A673 (cell line): ENCODE measurements at regions of chr6 and their contacts with region 1.

Region 1: DNA sequence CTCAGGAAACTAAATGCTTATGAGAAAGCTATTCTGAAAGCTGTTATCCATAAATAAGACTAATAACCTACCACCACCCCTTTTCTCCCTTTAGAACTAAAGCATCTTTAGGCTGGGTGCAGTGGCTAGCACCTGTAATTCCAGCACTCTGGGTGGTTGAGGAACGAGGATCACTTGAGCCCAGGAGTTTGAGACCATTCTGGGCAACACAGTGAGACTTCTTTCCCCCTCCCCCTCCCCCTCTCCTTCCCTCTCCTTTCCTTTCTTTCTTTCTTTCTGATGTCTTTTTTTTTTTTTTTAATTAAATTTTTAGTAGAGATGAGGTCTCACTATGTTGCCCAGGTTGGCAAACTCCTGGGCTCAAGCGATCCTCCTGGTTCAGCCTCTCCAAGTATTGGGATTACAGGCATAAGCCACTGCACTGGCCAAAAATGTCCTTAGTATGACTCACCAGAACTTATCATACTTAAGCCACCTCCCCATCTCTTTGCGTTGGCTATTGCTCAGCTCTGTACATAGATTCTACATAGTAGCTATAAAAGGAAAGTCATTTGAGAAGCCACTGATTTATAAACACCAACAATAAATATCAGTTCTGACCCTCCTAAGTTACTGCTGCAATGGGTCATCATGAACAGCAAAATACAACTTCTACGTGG is 54.8 kb upstream of the SPDEF start:
- DNase-seq: peak; percentile 27
- H3K4me3 ChIP-seq: no peak overlapping the region
- H3K27ac ChIP-seq: no peak overlapping the region
- H3K4me1 ChIP-seq: peaks cover 9% of the 10 kb centered on the region
- H3K27me3 ChIP-seq: no peaks in the 10 kb centered on the region
- CTCF ChIP-seq: no peak

Region 2: GRCh38 chr6:34161857-34162515 is 449.0 kb before region 1 on chr6:
- CTCF ChIA-PET with region 1: no interaction called
- POLR2A ChIA-PET with region 1: no interaction called
- intact Hi-C with region 1: loop called (anchors 10 kb)
- DNase-seq: no peak
- H3K4me3 ChIP-seq: no peak overlapping the region
- H3K27ac ChIP-seq: no peak overlapping the region
- H3K4me1 ChIP-seq: no peaks in the 10 kb centered on the region
- H3K27me3 ChIP-seq: no peaks in the 10 kb centered on the region
- CTCF ChIP-seq: no peak

Region 3: DNA sequence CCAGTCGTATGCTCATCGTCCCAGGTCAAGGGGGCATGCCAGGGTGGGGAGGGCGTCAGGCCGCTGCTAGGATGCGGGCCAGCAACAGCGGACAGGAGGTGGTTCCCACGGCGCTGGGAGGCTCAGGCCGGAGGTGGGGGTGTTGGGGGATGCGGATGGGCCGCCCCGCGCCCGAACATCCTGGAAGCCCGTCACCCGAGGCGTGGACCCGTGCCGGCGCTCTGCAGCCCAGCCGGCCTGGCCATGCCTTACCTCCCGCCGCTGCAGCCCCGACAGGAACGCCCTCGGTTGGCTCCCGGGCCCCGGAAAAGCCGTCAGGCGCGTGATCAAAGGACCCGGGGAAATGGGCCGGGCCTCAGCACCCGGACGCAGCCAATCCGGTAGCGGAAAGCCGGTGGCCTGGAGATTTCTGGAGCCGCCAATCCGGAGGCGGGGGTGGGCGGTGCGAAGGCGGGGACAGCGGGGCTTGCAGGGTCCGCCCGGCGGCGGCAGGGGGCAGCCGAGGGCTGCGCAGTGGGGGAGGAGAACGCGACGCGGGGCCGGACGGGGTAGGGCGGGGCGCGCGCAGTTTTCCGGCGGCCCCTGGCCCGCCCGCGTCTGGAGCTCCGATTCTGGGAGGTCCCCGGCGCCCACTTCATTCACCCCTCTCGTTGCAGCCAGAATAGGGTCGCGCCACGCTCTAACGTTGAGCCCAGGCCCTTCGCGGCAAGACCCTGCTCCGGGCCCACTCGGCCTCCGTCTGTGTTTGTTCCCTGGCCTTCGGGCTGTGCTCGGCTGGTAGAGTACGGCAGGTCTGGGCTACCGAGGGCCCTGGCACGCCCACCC is 362.0 kb before region 1 on chr6 and contains the start of gene SMIM29:
- CTCF ChIA-PET with region 1: interaction called, 5 read pairs
- POLR2A ChIA-PET with region 1: no interaction called
- intact Hi-C with region 1: loop called (anchors 5 kb)
- DNase-seq: peak; percentile 96
- H3K4me3 ChIP-seq: peak within 1 kb of the TSS; percentile 81
- H3K27ac ChIP-seq: peak within 1 kb of the TSS; percentile 72
- H3K4me1 ChIP-seq: peaks cover 19% of the 10 kb centered on the region
- H3K27me3 ChIP-seq: no peaks in the 10 kb centered on the region
- CTCF ChIP-seq: peak; percentile 89
- total RNA-seq, gene SMIM29: 19.1 and 24.0 TPM in 2 replicates

Region 4: GRCh38 chr6:34459899-34460593 is 150.9 kb before region 1 on chr6:
- CTCF ChIA-PET with region 1: interaction called, 18 read pairs
- POLR2A ChIA-PET with region 1: no interaction called
- intact Hi-C with region 1: loop called (anchors 5 kb)
- DNase-seq: peak; percentile 58
- H3K4me3 ChIP-seq: no peak overlapping the region
- H3K27ac ChIP-seq: no peak overlapping the region
- H3K4me1 ChIP-seq: peaks cover under 1% of the 10 kb centered on the region
- H3K27me3 ChIP-seq: no peaks in the 10 kb centered on the region
- CTCF ChIP-seq: peak; percentile 79

Region 5: GRCh38 chr6:34526992-34527728 is 83.8 kb before region 1 on chr6:
- CTCF ChIA-PET with region 1: no interaction called
- POLR2A ChIA-PET with region 1: no interaction called
- intact Hi-C with region 1: loop called (anchors 5 kb)
- DNase-seq: peak; percentile 92
- H3K4me3 ChIP-seq: peak overlapping the region; percentile 18
- H3K27ac ChIP-seq: no peak overlapping the region
- H3K4me1 ChIP-seq: peaks cover 7% of the 10 kb centered on the region
- H3K27me3 ChIP-seq: no peaks in the 10 kb centered on the region
- CTCF ChIP-seq: peak; percentile 68

Region 6: GRCh38 chr6:34630040-34630439 is 19.1 kb after region 1 on chr6:
- CTCF ChIA-PET with region 1: interaction called, 12 read pairs
- POLR2A ChIA-PET with region 1: no interaction called
- intact Hi-C with region 1: no loop called
- DNase-seq: peak; percentile 35
- H3K4me3 ChIP-seq: no peak overlapping the region
- H3K27ac ChIP-seq: no peak overlapping the region
- H3K4me1 ChIP-seq: no peaks in the 10 kb centered on the region
- H3K27me3 ChIP-seq: no peaks in the 10 kb centered on the region
- CTCF ChIP-seq: no peak

Region 7: DNA sequence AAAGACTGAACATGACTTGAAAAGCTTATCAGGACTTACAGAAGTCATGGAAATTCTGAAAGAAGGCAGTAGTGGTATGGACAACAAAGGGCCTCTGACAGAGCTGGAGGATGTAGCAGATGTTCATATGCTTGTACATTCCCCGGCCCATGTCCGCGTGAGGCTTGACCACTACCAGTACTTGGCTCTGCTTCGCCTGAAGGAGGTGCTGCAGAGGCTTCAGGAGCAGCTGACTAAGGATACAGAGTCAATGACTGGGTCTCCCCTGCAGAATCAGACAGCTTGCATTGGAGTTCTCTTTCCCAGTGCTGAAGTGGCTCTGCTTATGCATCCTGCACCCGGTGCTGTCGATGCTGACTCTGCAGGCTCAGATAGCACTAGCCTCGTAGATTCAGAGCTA is 247.7 kb after region 1 on chr6:
- CTCF ChIA-PET with region 1: no interaction called
- POLR2A ChIA-PET with region 1: no interaction called
- intact Hi-C with region 1: no loop called
- DNase-seq: no peak
- H3K4me3 ChIP-seq: no peak overlapping the region
- H3K27ac ChIP-seq: no peak overlapping the region
- H3K4me1 ChIP-seq: no peaks in the 10 kb centered on the region
- H3K27me3 ChIP-seq: no peaks in the 10 kb centered on the region
- CTCF ChIP-seq: 0 out of 2 replicates have a peak, but pooled peaks have one; percentile 19